ENCODE measurements at regions of chr18 and their contacts with region 1.

Region 1: DNA sequence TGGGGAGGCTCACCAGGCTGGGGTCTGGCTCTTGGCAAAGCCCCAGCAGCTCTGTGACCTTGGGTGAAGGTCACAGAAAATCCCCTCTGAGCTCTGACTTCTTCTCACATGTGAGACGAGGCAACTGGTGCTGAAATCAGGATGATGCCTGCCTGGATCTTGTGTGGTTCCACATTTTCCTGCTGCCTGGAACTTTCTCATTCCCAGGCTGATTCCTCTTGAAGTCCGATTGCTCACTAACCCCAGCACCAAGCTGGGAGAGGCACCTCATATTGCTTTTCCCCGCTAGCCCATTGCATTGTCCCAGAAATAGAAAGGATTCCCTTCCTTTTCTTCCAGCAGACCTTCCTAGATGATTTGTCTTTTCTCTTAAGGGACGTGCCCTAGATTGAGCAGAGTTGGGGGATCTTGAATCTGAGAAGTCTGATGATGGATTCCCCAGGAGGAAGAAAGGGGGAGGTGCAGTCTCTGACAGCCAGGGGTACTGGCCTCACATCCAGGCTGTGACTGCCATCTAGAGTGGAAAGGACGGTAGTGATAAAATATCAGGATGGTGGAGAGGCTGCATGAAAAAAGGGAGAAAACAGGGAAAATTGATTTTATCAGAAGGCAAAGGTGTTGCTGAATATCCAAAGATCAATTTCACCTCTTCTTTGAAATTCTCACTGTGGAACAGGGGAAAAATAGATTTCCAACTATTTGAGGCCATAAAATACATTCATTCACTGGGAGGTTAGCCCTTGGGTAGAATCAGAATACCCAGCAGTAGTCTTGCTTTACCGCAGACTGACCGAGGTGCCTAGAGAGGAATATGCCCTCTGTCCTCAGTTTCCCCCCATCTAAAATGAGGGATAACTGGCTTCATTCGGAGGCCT is 96.3 kb downstream of the FAM210A start:
- DNase-seq: peak; percentile 62 to 67
- H3K4me3 ChIP-seq: no peak overlapping the region
- H3K4me3 Mint-ChIP-seq: no peak overlapping the region
- H3K27ac Mint-ChIP-seq: no peak overlapping the region
- H3K4me1 ChIP-seq: no peaks in the 10 kb centered on the region
- H3K4me1 Mint-ChIP-seq: no peaks in the 10 kb centered on the region
- H3K27me3 ChIP-seq: no peaks in the 10 kb centered on the region
- H3K27me3 Mint-ChIP-seq: peaks cover 6% of the 10 kb centered on the region
- CTCF ChIP-seq: peak; percentile 82 to 84

Region 2: DNA sequence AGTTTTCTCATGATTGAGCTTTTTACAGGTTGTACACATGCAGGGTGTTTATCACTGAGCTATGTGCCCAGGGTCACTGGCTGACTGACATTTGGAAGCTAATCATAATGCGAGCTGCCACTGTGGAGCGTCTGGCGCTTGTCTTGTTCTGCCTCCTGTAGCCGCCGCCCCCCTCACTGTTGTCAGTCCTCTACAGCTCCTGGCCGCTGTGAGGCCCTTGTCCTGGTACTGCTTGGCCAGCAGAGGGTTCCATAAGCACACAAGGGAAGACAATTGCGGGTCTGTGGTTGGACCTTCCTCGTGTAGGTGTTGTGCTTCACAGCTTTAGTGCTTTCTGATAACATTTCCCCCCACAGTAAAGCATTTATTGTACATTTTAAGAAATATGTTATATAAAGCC is 517.1 kb before region 1 on chr18:
- CTCF ChIA-PET with region 1: interaction called, 4 read pairs
- POLR2A ChIA-PET with region 1: no interaction called
- intact Hi-C with region 1: loop called (anchors 1 kb)
- DNase-seq: peak; percentile 83 to 84
- H3K4me3 ChIP-seq: no peak overlapping the region
- H3K4me3 Mint-ChIP-seq: no peak overlapping the region
- H3K27ac Mint-ChIP-seq: no peak overlapping the region
- H3K4me1 ChIP-seq: no peaks in the 10 kb centered on the region
- H3K4me1 Mint-ChIP-seq: no peaks in the 10 kb centered on the region
- H3K27me3 ChIP-seq: no peaks in the 10 kb centered on the region
- H3K27me3 Mint-ChIP-seq: no peaks in the 10 kb centered on the region
- CTCF ChIP-seq: peak; percentile 64 to 79

Region 3: GRCh38 chr18:13137670-13138419 is 492.2 kb before region 1 on chr18:
- CTCF ChIA-PET with region 1: no interaction called
- POLR2A ChIA-PET with region 1: no interaction called
- intact Hi-C with region 1: loop called (anchors 1 kb)
- DNase-seq: peak; percentile 87 to 94
- H3K4me3 ChIP-seq: peak overlapping the region; percentile 56
- H3K4me3 Mint-ChIP-seq: peak overlapping the region; percentile 98
- H3K27ac Mint-ChIP-seq: peak overlapping the region; percentile 72
- H3K4me1 ChIP-seq: peaks cover 6% of the 10 kb centered on the region
- H3K4me1 Mint-ChIP-seq: peaks cover 7% of the 10 kb centered on the region
- H3K27me3 ChIP-seq: no peaks in the 10 kb centered on the region
- H3K27me3 Mint-ChIP-seq: no peaks in the 10 kb centered on the region
- CTCF ChIP-seq: no peak

Region 4: DNA sequence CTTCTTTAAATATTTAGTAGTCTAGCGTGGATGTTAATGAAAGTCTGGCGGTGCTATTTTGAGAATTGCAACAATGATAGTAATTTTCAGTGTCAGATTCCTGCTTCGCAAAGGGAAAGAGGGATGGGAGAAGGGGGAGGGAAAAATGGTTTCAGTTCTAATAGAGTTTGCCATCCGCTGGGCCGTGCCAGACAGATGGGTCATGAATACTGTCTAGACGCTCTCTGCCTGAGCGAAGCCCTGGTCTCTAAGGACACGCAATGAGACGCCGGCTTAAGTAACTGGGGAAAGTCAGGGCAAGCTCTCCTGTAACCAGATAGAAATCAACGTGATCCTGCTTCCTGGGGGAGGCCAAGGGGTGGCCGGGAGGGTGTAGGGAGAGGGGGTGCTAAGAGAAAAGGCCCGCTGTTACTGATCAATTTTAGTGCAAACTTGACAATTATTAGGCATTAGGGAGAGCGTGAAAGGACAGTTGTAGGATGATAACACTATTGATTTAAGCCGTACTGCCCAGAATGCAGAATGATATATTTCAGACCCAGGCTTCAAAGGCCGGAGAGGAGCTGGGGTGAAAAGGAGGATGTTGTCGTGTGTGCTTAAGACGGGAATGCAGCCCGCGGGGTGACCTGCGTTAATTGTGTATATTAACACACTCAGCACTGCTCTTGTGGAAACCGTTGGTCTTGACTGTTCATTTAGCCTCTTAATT is 182.3 kb before region 1 on chr18:
- CTCF ChIA-PET with region 1: no interaction called
- POLR2A ChIA-PET with region 1: no interaction called
- intact Hi-C with region 1: no loop called
- DNase-seq: no peak
- H3K4me3 ChIP-seq: no peak overlapping the region
- H3K4me3 Mint-ChIP-seq: no peak overlapping the region
- H3K27ac Mint-ChIP-seq: no peak overlapping the region
- H3K4me1 ChIP-seq: no peaks in the 10 kb centered on the region
- H3K4me1 Mint-ChIP-seq: no peaks in the 10 kb centered on the region
- H3K27me3 ChIP-seq: no peaks in the 10 kb centered on the region; the same call in 1 of the 2 replicates
- H3K27me3 Mint-ChIP-seq: peaks cover 28% of the 10 kb centered on the region
- CTCF ChIP-seq: no peak

Region 5: DNA sequence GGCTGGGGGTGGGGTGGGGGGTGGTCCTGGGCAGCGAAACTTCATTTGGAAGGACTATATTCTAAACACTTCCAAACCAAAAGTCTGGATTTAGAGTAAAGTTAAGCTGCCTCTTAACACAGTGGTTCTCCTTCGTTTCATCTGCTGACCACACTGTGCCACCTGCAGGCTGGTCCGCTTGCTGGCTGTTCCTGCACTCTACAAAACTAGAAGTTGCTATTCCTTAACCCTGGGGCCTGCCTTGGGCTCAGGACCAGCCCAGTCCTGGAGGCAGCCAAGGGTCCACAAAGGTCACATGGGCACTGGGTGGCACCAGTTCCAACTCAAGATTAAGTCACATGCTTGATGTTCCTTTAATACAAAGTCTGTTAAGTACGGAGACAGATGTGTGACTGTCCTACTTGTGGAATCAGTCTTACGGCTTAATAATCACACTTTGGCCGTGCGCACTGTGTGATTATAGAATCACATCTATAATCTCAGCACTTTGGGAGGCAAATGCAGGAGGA is 99.1 kb before region 1 on chr18:
- CTCF ChIA-PET with region 1: no interaction called
- POLR2A ChIA-PET with region 1: no interaction called
- intact Hi-C with region 1: loop called (anchors 1 kb)
- DNase-seq: peak in 1 of 2 experiments; percentile 31
- H3K4me3 ChIP-seq: no peak overlapping the region
- H3K4me3 Mint-ChIP-seq: no peak overlapping the region
- H3K27ac Mint-ChIP-seq: no peak overlapping the region
- H3K4me1 ChIP-seq: no peaks in the 10 kb centered on the region
- H3K4me1 Mint-ChIP-seq: no peaks in the 10 kb centered on the region
- H3K27me3 ChIP-seq: no peaks in the 10 kb centered on the region
- H3K27me3 Mint-ChIP-seq: peaks cover 20% of the 10 kb centered on the region
- CTCF ChIP-seq: peak; percentile 14 to 60

Region 6: DNA sequence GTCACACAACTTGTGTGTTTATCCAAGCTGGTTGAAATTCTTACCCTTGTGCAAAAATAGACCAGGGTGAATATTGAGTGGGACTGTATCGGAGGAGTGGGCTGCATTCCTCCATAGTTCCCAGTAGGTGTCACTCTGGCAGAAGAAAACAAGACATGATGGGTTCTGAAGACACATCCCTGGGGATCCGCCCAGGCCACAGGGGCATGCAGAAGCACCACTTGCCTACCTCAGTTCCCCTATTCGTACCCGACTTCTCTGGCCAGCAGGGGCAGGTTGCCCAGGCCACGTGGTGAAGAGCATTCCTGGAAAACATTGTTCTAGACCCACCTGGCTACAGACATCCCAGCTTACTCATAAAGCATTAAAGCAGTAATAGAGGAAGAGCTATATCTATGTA is 72.0 kb before region 1 on chr18:
- CTCF ChIA-PET with region 1: interaction called, 3 read pairs
- POLR2A ChIA-PET with region 1: no interaction called
- intact Hi-C with region 1: loop called (anchors 1 kb)
- DNase-seq: peak in 1 of 2 experiments; percentile 47
- H3K4me3 ChIP-seq: no peak overlapping the region
- H3K4me3 Mint-ChIP-seq: no peak overlapping the region
- H3K27ac Mint-ChIP-seq: no peak overlapping the region
- H3K4me1 ChIP-seq: no peaks in the 10 kb centered on the region
- H3K4me1 Mint-ChIP-seq: no peaks in the 10 kb centered on the region
- H3K27me3 ChIP-seq: no peaks in the 10 kb centered on the region
- H3K27me3 Mint-ChIP-seq: peaks cover 16% of the 10 kb centered on the region
- CTCF ChIP-seq: peak; percentile 59 to 77

Region 7: DNA sequence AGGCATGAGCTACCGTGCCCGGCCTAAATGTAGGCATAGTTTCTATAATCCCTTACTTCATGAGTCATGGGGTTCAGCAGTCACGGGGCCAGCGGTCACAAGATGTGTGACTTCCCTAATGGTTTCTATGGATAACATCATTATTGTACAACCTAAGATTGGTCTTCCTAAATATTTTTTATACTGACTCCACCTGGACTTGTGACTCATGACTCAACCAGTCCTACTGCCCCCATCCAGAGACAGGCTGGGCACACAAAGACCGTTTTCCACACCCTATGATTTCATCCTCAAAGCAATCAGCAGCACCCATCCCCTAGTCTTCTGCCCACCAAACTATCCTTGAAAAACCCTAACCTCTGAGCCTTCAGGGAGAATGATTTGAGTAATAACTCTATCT is 80.4 kb after region 1 on chr18:
- CTCF ChIA-PET with region 1: no interaction called
- POLR2A ChIA-PET with region 1: no interaction called
- intact Hi-C with region 1: no loop called
- DNase-seq: no peak
- H3K4me3 ChIP-seq: no peak overlapping the region
- H3K4me3 Mint-ChIP-seq: no peak overlapping the region
- H3K27ac Mint-ChIP-seq: no peak overlapping the region
- H3K4me1 ChIP-seq: 0 out of 2 replicates have a peak, but pooled peaks cover 3% of the 10 kb centered on the region
- H3K4me1 Mint-ChIP-seq: peaks cover 5% of the 10 kb centered on the region
- H3K27me3 ChIP-seq: no peaks in the 10 kb centered on the region
- H3K27me3 Mint-ChIP-seq: no peaks in the 10 kb centered on the region
- CTCF ChIP-seq: no peak

Region 8: GRCh38 chr18:13756261-13756660 is 126.2 kb after region 1 on chr18:
- CTCF ChIA-PET with region 1: no interaction called
- POLR2A ChIA-PET with region 1: no interaction called
- intact Hi-C with region 1: no loop called
- DNase-seq: no peak
- H3K4me3 ChIP-seq: no peak overlapping the region
- H3K4me3 Mint-ChIP-seq: no peak overlapping the region
- H3K27ac Mint-ChIP-seq: no peak overlapping the region
- H3K4me1 ChIP-seq: no peaks in the 10 kb centered on the region
- H3K4me1 Mint-ChIP-seq: no peaks in the 10 kb centered on the region
- H3K27me3 ChIP-seq: no peaks in the 10 kb centered on the region
- H3K27me3 Mint-ChIP-seq: no peaks in the 10 kb centered on the region
- CTCF ChIP-seq: no peak

Region 9: DNA sequence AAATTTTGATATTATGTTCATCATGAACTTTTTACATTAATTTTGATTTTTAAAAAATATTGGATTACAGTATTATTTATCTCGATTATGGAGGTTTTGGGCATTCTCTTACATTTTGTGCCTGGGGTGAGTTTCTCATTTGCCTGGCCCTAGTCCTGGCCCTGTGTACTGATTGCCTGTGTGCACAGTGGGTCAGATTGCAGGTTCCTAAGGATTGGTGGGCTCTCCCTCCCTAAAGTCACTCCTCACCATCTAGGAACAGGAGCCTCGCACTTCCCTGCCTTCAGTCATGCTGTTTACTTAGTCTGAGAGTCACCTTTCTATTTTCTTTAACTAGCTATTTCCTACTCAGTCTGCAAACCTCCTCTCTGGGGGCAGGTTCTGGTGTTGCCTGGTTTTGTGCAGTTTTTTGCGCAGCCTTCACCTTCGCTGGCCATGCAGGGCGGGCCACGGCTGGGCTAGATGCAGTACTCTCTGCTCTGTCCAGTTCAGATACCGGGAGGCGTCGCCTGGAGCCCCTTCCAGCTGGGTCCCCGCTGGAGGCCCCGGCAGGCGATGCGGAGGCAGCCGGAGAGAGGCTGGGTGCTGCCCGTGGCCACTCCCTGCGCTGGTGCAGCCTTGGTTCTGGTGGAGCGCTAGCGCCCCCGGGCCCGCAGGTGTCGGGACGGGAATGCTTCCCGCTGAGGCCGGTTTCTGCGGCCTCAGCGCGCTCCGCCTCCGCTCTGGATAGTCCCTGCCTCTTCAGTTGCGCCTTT is 170.6 kb after region 1 on chr18:
- CTCF ChIA-PET with region 1: no interaction called
- POLR2A ChIA-PET with region 1: no interaction called
- intact Hi-C with region 1: loop called (anchors 10 kb)
- DNase-seq: peak; percentile 78 to 84
- H3K4me3 ChIP-seq: peak overlapping the region; percentile 27
- H3K4me3 Mint-ChIP-seq: peak overlapping the region; percentile 73
- H3K27ac Mint-ChIP-seq: no peak overlapping the region
- H3K4me1 ChIP-seq: no peaks in the 10 kb centered on the region
- H3K4me1 Mint-ChIP-seq: peaks cover 11% of the 10 kb centered on the region
- H3K27me3 ChIP-seq: no peaks in the 10 kb centered on the region
- H3K27me3 Mint-ChIP-seq: peaks cover 7% of the 10 kb centered on the region
- CTCF ChIP-seq: peak; percentile 47 to 86